Caco-2 (cell line): ENCODE measurements at regions of chr3 and their contacts with region 1.

Region 1: GRCh38 chr3:57646723-57647122 is 46.2 kb downstream of the DENND6A start:
- DNase-seq: peak in 1 of 2 experiments; percentile 18
- H3K4me3 ChIP-seq: no peak overlapping the region
- H3K4me3 Mint-ChIP-seq: no peak overlapping the region
- H3K27ac Mint-ChIP-seq: no peak overlapping the region
- H3K4me1 ChIP-seq: no peaks in the 10 kb centered on the region
- H3K4me1 Mint-ChIP-seq: peaks cover 13% of the 10 kb centered on the region
- H3K27me3 ChIP-seq: no peaks in the 10 kb centered on the region
- H3K27me3 Mint-ChIP-seq: no peaks in the 10 kb centered on the region
- CTCF ChIP-seq: no peak

Region 2: GRCh38 chr3:57852896-57853295 is 206.2 kb after region 1 on chr3:
- CTCF ChIA-PET with region 1: no interaction called
- POLR2A ChIA-PET with region 1: no interaction called
- intact Hi-C with region 1: loop called (anchors 2 kb)
- DNase-seq: no peak
- H3K4me3 ChIP-seq: no peak overlapping the region
- H3K4me3 Mint-ChIP-seq: no peak overlapping the region
- H3K27ac Mint-ChIP-seq: no peak overlapping the region
- H3K4me1 ChIP-seq: peaks cover 14% of the 10 kb centered on the region
- H3K4me1 Mint-ChIP-seq: peaks cover 20% of the 10 kb centered on the region
- H3K27me3 ChIP-seq: no peaks in the 10 kb centered on the region
- H3K27me3 Mint-ChIP-seq: no peaks in the 10 kb centered on the region
- CTCF ChIP-seq: peak in 1 of 2 experiments; percentile 3